A549 (cell line): ENCODE measurements at regions of chr6 and their contacts with region 1.

Region 1: GRCh38 chr6:109705258-109705657 is 14.2 kb downstream of the FIG4 start:
- DNase-seq: peak; percentile 16 to 78
- ATAC-seq: peak; percentile 89 to 95
- H3K4me3 ChIP-seq: no peak overlapping the region
- H3K27ac ChIP-seq: no peak overlapping the region
- H3K4me1 ChIP-seq: no peaks in the 10 kb centered on the region
- CTCF ChIP-seq: peak; percentile 99
- EP300 ChIP-seq: no peak
- POLR2A ChIP-seq: no peak
- RAD21 ChIP-seq: peak; percentile 88 to 93

Region 2: DNA sequence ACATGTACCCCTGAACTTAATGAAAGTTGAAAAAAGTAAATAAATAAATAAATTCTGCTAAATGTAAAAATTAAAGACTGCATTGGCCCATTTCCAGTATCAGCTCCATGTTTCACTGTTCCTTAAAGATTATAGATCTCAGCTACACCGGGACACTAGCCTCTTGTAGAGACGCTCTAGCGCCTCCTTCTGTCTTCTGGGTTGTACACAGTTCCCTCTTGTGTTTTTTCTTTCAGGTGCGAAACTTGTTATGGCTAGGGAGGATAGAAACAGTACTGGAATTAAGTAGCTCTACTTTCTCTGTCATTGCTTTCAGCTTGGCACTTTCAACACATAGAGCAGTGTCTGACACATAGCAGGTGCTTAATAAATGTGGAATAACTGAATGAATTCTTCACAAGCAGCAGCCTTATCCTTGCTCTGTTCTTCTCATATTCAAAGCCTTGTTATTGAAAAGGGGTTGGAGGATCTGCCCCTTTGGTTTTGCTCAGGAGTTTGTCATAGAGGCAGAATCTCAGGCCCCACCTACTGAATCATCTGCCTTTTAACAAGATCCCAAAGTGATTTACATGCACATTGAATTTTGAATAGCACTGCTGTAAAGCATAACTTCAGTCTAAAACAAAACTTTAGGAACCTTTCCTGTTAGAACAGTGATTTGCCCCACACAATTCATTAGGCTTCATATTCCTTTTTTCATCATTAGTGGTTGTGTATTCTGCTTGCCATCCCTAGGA is 78.2 kb after region 1 on chr6:
- CTCF ChIA-PET with region 1: interaction called, 10 read pairs
- POLR2A ChIA-PET with region 1: no interaction called
- DNase-seq: no peak
- ATAC-seq: no peak
- H3K4me3 ChIP-seq: no peak overlapping the region
- H3K27ac ChIP-seq: no peak overlapping the region
- H3K4me1 ChIP-seq: no peaks in the 10 kb centered on the region
- CTCF ChIP-seq: no peak
- EP300 ChIP-seq: no peak
- POLR2A ChIP-seq: no peak
- RAD21 ChIP-seq: no peak

Region 3: GRCh38 chr6:110048221-110048875 is 343.1 kb after region 1 on chr6:
- CTCF ChIA-PET with region 1: interaction called, 11 read pairs
- POLR2A ChIA-PET with region 1: no interaction called
- DNase-seq: no peak
- ATAC-seq: no peak; a peak in 1 of 6 replicates
- H3K4me3 ChIP-seq: no peak overlapping the region
- H3K27ac ChIP-seq: no peak overlapping the region
- H3K4me1 ChIP-seq: no peaks in the 10 kb centered on the region
- CTCF ChIP-seq: no peak
- EP300 ChIP-seq: no peak
- POLR2A ChIP-seq: no peak
- RAD21 ChIP-seq: no peak

Region 4: GRCh38 chr6:110389689-110390382 is 684.6 kb after region 1 on chr6:
- CTCF ChIA-PET with region 1: interaction called, 33 read pairs
- POLR2A ChIA-PET with region 1: no interaction called
- DNase-seq: no peak
- ATAC-seq: no peak
- H3K4me3 ChIP-seq: no peak overlapping the region
- H3K27ac ChIP-seq: no peak overlapping the region
- H3K4me1 ChIP-seq: no peaks in the 10 kb centered on the region
- CTCF ChIP-seq: no peak
- EP300 ChIP-seq: no peak
- POLR2A ChIP-seq: no peak
- RAD21 ChIP-seq: no peak